Naive thymus-derived CD8-positive, alpha-beta T cell (primary cell): ENCODE measurements at regions of chr7 and their contacts with region 1.

Region 1: GRCh38 chr7:150631866-150632864 is at the start of gene GIMAP6:
- DNase-seq: peak; percentile 7 to 69 (median 32)
- ATAC-seq: peak; percentile 59 to 72
- H3K4me3 Mint-ChIP-seq: peak within 1 kb of the TSS; percentile 92 to 98 (median 96)
- H3K27ac Mint-ChIP-seq: peak within 1 kb of the TSS; percentile 90 to 98 (median 96)
- H3K4me1 Mint-ChIP-seq: peaks cover 41 to 87% (median 84%) of the 10 kb centered on the region in 4 donors
- H3K27me3 Mint-ChIP-seq: no peaks in the 10 kb centered on the region
- polyA plus RNA-seq, gene GIMAP6: 115 to 173 (median 121) TPM

Region 2: DNA sequence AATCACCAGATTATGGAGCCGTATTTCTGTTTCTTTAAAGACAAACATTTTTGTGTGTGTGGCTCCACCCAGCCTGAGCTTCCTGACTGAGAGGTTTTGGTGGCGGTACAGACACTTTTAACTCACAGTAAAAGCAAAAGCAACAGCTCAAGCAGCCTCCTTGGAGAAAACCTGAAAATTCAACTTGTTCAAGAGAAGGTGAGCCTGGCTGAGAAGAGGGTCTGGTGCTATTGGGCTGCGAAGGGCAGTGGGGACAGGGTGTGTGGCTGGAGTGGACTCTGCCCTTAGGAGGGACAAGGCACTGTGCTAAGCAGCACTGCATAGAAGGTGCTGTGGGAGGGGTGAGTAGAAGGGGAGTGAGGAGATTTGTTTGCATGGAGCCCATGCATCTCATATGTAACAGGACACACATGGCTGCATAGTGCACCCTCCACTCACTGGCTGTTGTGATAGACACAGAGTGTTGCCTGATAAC is 117.4 kb before region 1 on chr7 and contains the start of gene GIMAP7:
- POLR2A ChIA-PET with region 1: interaction called, 48 read pairs
- DNase-seq: peak; percentile 29 to 87 (median 71)
- ATAC-seq: peak; percentile 72 to 85
- H3K4me3 Mint-ChIP-seq: peak within 1 kb of the TSS; percentile 96 to 100 (median 99)
- H3K27ac Mint-ChIP-seq: peak within 1 kb of the TSS; percentile 94 to 99 (median 98)
- H3K4me1 Mint-ChIP-seq: peaks cover 25 to 50% (median 48%) of the 10 kb centered on the region in 4 donors
- H3K27me3 Mint-ChIP-seq: no peaks in the 10 kb centered on the region
- polyA plus RNA-seq, gene GIMAP7: 451 to 821 (median 658) TPM

Region 3: DNA sequence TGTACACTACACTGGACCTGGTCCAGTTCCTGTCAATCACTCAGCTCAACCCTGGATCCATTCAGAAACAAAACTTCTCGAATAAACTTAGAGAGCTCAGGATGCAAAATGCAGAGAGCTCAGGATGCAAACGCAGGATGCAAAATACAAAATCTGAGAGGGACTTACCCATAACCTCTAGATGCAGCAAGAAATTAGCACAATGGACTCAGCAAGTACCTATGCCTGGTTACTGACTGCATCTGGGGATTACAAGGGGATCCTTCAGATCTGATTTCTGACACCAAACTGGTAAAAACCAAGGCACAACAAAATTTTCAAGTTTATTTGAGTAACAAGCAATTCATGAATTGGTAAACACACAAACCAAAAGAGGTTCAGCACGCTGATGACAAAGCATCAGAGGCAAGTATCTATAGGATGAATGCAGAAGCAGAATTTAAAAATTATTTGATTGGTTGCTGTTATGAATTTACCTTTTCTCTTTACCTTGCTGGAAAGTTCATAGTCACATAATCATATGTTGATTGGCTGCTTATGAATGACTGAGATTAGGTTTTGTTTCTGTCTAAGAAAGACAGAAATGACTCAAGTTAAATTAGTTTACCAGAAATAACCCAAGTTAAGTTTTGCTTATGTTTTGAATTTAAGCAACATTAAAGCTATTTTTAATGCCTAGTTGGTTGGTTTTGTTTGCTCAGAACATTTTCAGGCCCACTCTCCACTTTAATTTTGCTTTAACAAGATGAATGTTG is 11.4 kb before region 1 on chr7:
- POLR2A ChIA-PET with region 1: interaction called, 52 read pairs
- DNase-seq: no peak
- ATAC-seq: peak; percentile 39 to 49
- H3K4me3 Mint-ChIP-seq: peak overlapping the region in 7 of 10 donors; percentile 16 to 56 (median 52)
- H3K27ac Mint-ChIP-seq: peak overlapping the region; percentile 42 to 90 (median 86)
- H3K4me1 Mint-ChIP-seq: peaks cover 21 to 70% (median 56%) of the 10 kb centered on the region in 4 donors
- H3K27me3 Mint-ChIP-seq: no peaks in the 10 kb centered on the region

Region 4: DNA sequence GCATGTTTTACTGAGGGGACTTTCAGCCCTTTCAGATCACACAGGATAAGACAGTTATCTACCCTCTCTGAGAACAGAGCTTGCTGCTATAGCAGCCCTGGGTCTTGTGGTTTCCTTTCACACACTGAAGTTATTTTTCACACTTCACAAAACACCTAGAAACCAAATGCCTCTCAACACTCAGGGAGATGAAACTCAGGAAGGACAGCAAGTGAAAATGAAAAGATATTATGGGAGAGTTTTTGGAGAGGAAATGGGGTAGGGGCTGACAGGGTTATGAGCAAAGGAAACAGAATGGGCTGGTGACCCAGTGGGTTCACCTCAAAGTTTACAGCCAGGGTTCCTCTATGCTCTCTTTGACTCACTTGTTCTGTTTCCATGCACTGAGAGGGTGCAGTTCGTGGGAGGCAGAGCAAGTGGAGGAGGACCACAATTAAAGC is 36.3 kb after region 1 on chr7:
- POLR2A ChIA-PET with region 1: interaction called, 118 read pairs
- DNase-seq: peak in 9 of 10 donors; percentile 41 to 86 (median 71)
- ATAC-seq: peak; percentile 79 to 92
- H3K4me3 Mint-ChIP-seq: peak overlapping the region; percentile 60 to 85 (median 78)
- H3K27ac Mint-ChIP-seq: peak overlapping the region; percentile 94 to 100 (median 98)
- H3K4me1 Mint-ChIP-seq: peaks cover 34 to 93% (median 89%) of the 10 kb centered on the region in 4 donors
- H3K27me3 Mint-ChIP-seq: no peaks in the 10 kb centered on the region

Region 5: GRCh38 chr7:150716368-150716767 is 84.2 kb after region 1 on chr7 and contains the start of gene GIMAP1:
- POLR2A ChIA-PET with region 1: interaction called, 165 read pairs
- DNase-seq: peak; percentile 39 to 85 (median 68)
- ATAC-seq: peak; percentile 81 to 91
- H3K4me3 Mint-ChIP-seq: peak within 1 kb of the TSS; percentile 92 to 100 (median 97)
- H3K27ac Mint-ChIP-seq: peak within 1 kb of the TSS; percentile 89 to 99 (median 98)
- H3K4me1 Mint-ChIP-seq: peaks cover 40 to 69% (median 66%) of the 10 kb centered on the region in 4 donors
- H3K27me3 Mint-ChIP-seq: no peaks in the 10 kb centered on the region
- polyA plus RNA-seq, gene GIMAP1: 48.0 to 87.4 (median 67.1) TPM

Region 6: DNA sequence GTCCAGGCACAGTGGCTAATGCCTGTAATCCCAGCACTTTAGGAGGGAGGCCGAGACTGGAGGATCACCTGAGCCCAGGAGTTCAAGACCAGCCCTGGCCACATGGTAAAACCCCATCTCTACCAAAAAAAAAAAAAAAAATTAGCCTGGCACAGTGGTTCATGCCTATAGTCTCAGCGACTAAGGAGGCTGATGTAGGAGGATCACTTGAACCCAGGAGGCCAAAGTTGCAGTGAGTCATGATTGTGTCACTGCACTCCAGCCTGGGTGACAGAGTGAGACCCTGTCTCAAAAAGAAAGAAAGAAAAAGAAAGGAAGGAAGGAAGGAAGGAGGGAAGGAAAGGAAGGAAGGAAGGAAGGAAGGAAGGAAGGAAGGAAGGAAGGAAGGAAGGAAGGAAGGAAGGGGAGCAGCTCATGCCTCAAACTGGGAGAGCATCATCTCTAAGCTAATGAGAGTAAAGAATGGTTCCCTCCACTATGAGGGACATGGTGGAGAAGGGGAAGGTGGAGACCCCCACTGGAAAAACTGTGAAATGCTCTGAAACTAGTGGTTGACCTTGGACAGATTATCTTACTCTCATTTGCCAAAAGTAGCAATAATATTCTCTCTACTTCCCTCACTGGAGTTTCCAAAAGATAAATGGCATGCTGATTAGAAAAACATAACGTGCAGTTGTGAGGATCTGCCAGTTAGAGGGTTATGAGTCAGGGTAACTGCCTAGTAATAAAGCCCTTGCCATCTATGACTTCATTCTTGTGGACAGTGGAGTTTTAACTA is 121.8 kb after region 1 on chr7:
- POLR2A ChIA-PET with region 1: interaction called, 53 read pairs
- DNase-seq: peak in 1 of 10 donors; percentile 60
- ATAC-seq: peak in 1 of 2 donors; percentile 10
- H3K4me3 Mint-ChIP-seq: peak overlapping the region in 9 of 10 donors; percentile 36 to 78 (median 63)
- H3K27ac Mint-ChIP-seq: peak overlapping the region; percentile 66 to 97 (median 94)
- H3K4me1 Mint-ChIP-seq: peaks cover 35 to 77% (median 71%) of the 10 kb centered on the region in 4 donors
- H3K27me3 Mint-ChIP-seq: peaks cover 0 to 2% (median 0%) of the 10 kb centered on the region in 5 donors